ENCODE measurements at regions of chr17 and their contacts with region 1.

Region 1: GRCh38 chr17:27654654-27655524 is 23.9 kb downstream of the LGALS9 start:
- DNase-seq: peak; percentile 92 to 94
- ATAC-seq: peak; percentile 79 to 97
- H3K4me3 ChIP-seq: no peak overlapping the region
- H3K27ac ChIP-seq: peak overlapping the region in 1 of 2 experiments; percentile 35; a peak in 1 of 6 replicates
- H3K4me1 ChIP-seq: no peaks in the 10 kb centered on the region
- CTCF ChIP-seq: peak; percentile 100
- EP300 ChIP-seq: no peak
- POLR2A ChIP-seq: no peak
- RAD21 ChIP-seq: peak; percentile 68 to 88

Region 2: DNA sequence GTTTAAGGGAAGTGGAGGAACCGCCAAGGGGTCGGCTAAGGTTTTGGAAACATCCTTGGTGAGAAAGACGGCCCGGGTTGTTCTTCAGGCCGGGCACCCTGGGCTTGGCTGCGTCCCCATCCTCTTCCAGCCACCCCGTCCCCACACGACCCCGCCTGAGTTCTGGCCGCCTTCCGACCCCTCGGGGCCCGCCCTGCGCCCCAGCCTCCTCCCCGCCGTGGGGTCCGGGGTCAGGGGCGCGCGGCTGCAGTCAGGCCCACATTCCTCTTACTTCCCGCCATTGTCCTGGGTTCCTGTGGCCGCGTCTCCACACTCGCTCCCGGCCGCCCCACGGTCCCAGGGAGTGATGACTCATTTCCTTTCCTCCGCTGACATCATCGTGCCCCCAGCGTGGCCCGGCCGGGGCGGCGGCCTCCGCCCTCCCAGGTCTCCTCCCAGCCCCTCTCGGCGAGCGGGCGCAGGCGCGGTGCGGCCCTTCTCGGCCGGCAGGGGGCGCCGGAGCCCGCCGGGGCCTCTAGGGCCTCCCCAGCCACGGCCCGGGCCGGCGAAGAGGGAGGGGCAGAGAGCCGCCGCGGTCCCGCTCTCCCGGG is 301.3 kb before region 1 on chr17:
- CTCF ChIA-PET with region 1: interaction called, 12 read pairs
- POLR2A ChIA-PET with region 1: no interaction called
- DNase-seq: peak; percentile 96 to 97
- ATAC-seq: peak; percentile 85 to 93
- H3K4me3 ChIP-seq: peak overlapping the region; percentile 59
- H3K27ac ChIP-seq: peak overlapping the region; percentile 90 to 99
- H3K4me1 ChIP-seq: peaks cover 25% of the 10 kb centered on the region
- CTCF ChIP-seq: peak; percentile 99
- EP300 ChIP-seq: peak; percentile 49 to 64; a peak in 2 of 5 replicates
- POLR2A ChIP-seq: peak; percentile 81
- RAD21 ChIP-seq: peak; percentile 67 to 99

Region 3: DNA sequence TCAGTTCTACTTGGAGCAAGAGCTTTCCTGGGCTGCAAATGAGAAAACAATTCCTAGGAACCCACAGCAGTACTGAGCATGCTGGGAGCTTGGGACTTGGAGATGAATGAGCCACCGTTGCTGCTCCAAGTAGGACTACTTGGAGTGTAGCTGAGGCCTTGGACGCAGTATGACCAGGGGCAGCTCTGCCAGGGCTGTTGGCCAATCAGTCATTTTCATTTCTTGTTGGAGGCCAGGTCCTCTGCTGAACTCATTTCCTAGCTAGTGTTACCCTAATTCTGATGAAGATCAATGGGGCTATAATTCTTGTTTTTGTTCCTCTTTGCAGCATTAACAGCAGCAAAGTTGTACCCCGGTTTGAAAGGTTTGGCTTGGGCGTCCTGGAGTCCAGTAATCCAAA is 31.9 kb before region 1 on chr17:
- CTCF ChIA-PET with region 1: interaction called, 53 read pairs
- POLR2A ChIA-PET with region 1: no interaction called
- DNase-seq: no peak
- ATAC-seq: no peak
- H3K4me3 ChIP-seq: no peak overlapping the region
- H3K27ac ChIP-seq: no peak overlapping the region
- H3K4me1 ChIP-seq: no peaks in the 10 kb centered on the region
- CTCF ChIP-seq: no peak
- EP300 ChIP-seq: no peak
- POLR2A ChIP-seq: no peak
- RAD21 ChIP-seq: no peak

Region 4: GRCh38 chr17:27640790-27641189 is 14.1 kb before region 1 on chr17:
- CTCF ChIA-PET with region 1: interaction called, 33 read pairs
- POLR2A ChIA-PET with region 1: no interaction called
- DNase-seq: no peak
- ATAC-seq: no peak
- H3K4me3 ChIP-seq: no peak overlapping the region
- H3K27ac ChIP-seq: no peak overlapping the region
- H3K4me1 ChIP-seq: no peaks in the 10 kb centered on the region
- CTCF ChIP-seq: no peak
- EP300 ChIP-seq: no peak
- POLR2A ChIP-seq: no peak
- RAD21 ChIP-seq: no peak

Region 5: GRCh38 chr17:27674335-27674734 is 19.4 kb after region 1 on chr17:
- CTCF ChIA-PET with region 1: interaction called, 15 read pairs
- POLR2A ChIA-PET with region 1: no interaction called
- DNase-seq: no peak
- ATAC-seq: no peak
- H3K4me3 ChIP-seq: no peak overlapping the region
- H3K27ac ChIP-seq: no peak overlapping the region
- H3K4me1 ChIP-seq: no peaks in the 10 kb centered on the region
- CTCF ChIP-seq: no peak
- EP300 ChIP-seq: no peak
- POLR2A ChIP-seq: no peak
- RAD21 ChIP-seq: no peak

Region 6: GRCh38 chr17:27771586-27771985 is 116.7 kb after region 1 on chr17:
- CTCF ChIA-PET with region 1: interaction called, 14 read pairs
- POLR2A ChIA-PET with region 1: no interaction called
- DNase-seq: no peak
- ATAC-seq: no peak
- H3K4me3 ChIP-seq: no peak overlapping the region
- H3K27ac ChIP-seq: no peak overlapping the region
- H3K4me1 ChIP-seq: no peaks in the 10 kb centered on the region
- CTCF ChIP-seq: no peak
- EP300 ChIP-seq: no peak
- POLR2A ChIP-seq: no peak
- RAD21 ChIP-seq: no peak

Region 7: GRCh38 chr17:27907976-27908558 is 253.2 kb after region 1 on chr17:
- CTCF ChIA-PET with region 1: no interaction called
- POLR2A ChIA-PET with region 1: no interaction called
- DNase-seq: no peak
- ATAC-seq: no peak
- H3K4me3 ChIP-seq: no peak overlapping the region
- H3K27ac ChIP-seq: no peak overlapping the region
- H3K4me1 ChIP-seq: no peaks in the 10 kb centered on the region
- CTCF ChIP-seq: no peak
- EP300 ChIP-seq: no peak
- POLR2A ChIP-seq: no peak
- RAD21 ChIP-seq: no peak

Region 8: DNA sequence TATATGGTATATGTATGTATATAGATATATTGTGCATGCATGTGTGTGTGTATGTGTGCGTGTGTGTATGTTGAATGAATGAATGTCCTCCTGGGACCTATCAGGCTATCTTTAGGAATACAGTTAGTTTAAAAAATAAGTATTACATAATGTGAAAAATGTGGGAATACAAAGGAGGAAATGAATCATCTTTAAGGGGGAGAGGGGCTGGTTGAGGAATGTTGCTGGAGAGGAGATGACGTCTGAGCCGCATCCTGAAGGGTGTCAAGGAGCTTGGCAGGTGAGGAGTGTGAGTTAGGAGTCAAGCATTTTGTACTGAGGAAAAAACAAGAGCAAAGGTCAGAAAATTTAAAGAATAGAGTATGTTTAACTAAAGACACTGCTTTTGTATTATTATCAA is 325.2 kb after region 1 on chr17:
- CTCF ChIA-PET with region 1: no interaction called
- POLR2A ChIA-PET with region 1: no interaction called
- DNase-seq: peak; percentile 42 to 72
- ATAC-seq: peak in 1 of 2 experiments; percentile 71; a peak in 4 of 6 replicates
- H3K4me3 ChIP-seq: no peak overlapping the region
- H3K27ac ChIP-seq: no peak overlapping the region
- H3K4me1 ChIP-seq: peaks cover 10% of the 10 kb centered on the region; the same call in 2 of the 3 replicates
- CTCF ChIP-seq: no peak
- EP300 ChIP-seq: 0 out of 5 replicates have a peak, but pooled peaks of 1 of the 2 experiments have one; percentile 20
- POLR2A ChIP-seq: no peak
- RAD21 ChIP-seq: no peak

Measured in A549 (cell line).